ENCODE measurements at regions of chr7 and their contacts with region 1.

Region 1: DNA sequence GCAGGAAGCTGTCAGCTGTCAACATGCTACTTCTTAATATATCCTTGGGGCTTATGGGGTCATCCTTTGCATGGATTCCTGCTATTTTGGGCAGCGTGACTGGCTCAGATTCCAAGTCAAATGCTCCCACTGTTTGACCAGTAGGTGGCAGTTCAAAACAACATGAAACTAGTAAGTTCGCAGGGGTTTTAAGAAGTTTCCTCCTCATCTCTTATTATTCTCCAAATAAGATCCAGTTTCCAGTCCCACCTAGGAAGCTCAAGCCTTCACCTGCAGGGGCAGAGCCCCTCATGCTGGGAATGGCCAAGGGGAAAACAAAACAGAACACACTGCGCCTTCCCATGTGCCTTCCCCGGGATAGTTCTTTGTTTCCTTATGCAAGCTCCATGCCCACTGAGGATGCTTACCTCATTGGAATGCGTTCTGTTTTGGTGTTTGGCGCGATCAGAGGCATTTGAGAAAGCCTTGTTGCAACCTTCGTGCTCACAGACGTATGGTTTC is 259.8 kb downstream of the GLI3 start:
- DNase-seq: peak; percentile 57 to 64
- H3K4me3 ChIP-seq: no peak overlapping the region
- H3K27ac ChIP-seq: peak overlapping the region; percentile 67 to 80 (median 68)
- H3K4me1 ChIP-seq: peaks cover 45 to 46% of the 10 kb centered on the region in 2 donors
- H3K27me3 ChIP-seq: no peaks in the 10 kb centered on the region
- CTCF ChIP-seq: peak; percentile 38 to 82 (median 67)
- POLR2A ChIP-seq: no peak

Region 2: GRCh38 chr7:42167206-42167605 is 190.0 kb after region 1 on chr7:
- intact Hi-C with region 1: loop called (anchors 2 kb)
- DNase-seq: no peak
- H3K4me3 ChIP-seq: no peak overlapping the region
- H3K27ac ChIP-seq: peak overlapping the region; percentile 16 to 69 (median 65)
- H3K4me1 ChIP-seq: peaks cover 28 to 38% of the 10 kb centered on the region in 2 donors
- H3K27me3 ChIP-seq: no peaks in the 10 kb centered on the region
- CTCF ChIP-seq: no peak
- POLR2A ChIP-seq: no peak

Region 3: GRCh38 chr7:42237162-42237821 is 260.1 kb after region 1 on chr7 and contains the start of gene GLI3:
- intact Hi-C with region 1: loop called (anchors 5 kb)
- DNase-seq: peak; percentile 87 to 88
- H3K4me3 ChIP-seq: peak within 1 kb of the TSS; percentile 82 to 86 (median 84)
- H3K27ac ChIP-seq: peak within 1 kb of the TSS; percentile 81 to 93 (median 93)
- H3K4me1 ChIP-seq: peaks cover 13 to 32% of the 10 kb centered on the region in 2 donors
- H3K27me3 ChIP-seq: no peaks in the 10 kb centered on the region
- CTCF ChIP-seq: peak in 3 of 6 experiments; percentile 18 to 26 (median 25)
- POLR2A ChIP-seq: peak in 1 of 2 donors; percentile 85
- total RNA-seq, gene GLI3: 10.1 to 15.6 (median 13.6) TPM